ENCODE measurements at regions of chr1 and their contacts with region 1.

Region 1: DNA sequence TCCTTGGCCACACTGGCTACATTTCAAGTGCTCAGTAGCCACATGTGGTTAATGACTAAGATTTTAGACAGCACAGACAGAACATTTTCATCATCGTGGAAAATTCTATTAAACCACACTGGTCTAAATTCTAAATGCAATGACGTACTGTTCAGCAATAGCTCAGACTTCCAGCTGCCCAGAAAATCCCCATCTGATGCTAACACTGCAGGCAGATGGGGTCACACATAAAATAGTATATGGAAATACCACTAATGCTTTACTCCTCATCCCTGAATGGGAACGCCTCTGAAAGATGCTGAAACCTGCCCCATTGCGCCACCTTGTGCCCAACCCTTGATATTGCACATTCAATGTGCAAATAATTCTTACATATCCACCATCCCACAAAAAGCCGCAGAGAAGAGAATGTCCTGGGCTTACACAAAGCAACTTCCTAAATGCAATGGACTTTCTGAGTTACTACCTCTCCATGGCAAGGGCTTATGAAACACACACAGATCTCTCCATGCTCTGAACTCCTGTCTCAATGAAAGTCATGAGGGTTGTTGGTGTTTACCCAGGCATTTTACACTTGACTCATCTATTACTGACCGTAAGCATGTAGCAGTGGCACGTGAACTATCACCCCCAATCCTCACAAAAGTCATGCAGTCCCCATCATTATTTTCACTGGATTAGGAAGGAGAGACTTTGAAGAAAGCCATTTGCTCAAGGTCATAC is 20.3 kb upstream of the SLC5A9 start:
- DNase-seq: peak in 1 of 2 donors; percentile 53
- ATAC-seq: peak; percentile 80

Region 2: DNA sequence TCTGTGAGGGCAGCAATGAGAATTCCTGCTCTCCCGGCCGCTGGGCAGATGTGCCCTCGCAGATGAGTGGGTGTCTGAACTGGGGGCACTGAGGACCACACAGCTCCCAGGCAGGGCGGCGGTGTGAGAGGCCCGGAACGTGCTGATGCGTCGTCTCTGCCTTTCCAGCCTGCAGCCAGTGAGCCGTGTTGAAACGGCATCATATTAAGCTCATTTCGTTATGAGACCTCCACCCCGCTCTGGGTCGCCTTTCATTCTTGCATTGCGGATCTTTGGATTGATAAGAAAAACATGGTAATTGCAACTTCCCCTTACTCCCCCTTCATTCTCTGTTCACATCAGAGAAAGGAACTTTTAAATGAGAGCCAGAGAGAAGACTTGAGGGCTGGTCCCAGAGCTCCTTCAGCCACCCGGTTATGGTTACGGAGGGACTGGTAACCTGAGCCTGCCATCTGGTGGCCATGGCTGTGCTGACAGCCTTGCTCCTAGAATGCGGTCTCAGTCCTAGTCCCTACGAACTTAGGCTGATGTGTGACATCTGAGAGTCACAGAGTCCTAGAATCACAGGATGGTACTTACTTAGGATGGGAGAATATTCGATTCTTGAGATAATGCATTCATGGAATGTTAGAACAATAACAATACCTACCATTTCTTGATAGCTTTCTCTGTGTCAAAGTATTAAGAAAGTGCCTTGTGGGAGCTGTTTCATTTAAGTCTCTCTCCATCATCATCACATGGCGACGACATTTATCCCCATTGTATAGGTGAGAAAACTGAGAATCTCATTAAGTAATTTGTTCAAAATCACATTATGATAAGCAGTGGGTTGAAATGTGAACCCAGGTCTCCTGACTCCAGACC is 476.0 kb before region 1 on chr1:
- intact Hi-C with region 1: loop called in 1 of 2 experiments (anchors 5 kb)
- DNase-seq: peak; percentile 84 to 92
- ATAC-seq: peak; percentile 52

Region 3: DNA sequence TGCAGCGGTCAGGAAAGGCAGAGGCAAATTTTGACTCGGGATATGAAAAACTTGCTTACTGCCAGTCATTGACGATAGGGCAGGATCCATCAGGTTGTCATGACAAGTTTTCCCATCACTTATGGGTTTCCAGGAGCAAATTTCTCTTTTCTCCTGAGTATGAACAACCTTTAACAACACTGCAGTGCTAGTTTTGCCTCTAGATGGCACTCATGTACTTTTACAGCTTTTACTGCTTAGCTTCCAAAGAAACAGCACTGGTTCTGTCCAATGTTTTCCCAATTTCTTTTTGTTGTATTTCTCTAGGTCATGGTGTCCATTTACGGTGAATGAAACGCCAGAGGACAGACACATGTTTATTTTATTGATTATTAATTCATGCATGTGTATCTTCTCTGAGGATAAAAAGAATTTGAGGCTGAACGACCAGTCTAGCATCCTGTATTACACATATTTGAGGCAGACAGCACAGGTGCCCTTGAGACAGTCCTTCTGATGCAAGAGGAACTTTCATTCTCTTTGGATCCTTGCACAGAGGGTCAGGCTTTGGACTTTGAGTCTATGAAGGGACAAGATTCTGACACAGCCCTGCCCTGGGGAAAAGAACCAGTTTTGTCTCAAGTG is 92.7 kb before region 1 on chr1:
- intact Hi-C with region 1: loop called in 1 of 2 experiments (anchors 2 kb)
- DNase-seq: no peak
- ATAC-seq: peak; percentile 73

Region 4: GRCh38 chr1:48396208-48396607 is 194.0 kb after region 1 on chr1:
- intact Hi-C with region 1: no loop called
- DNase-seq: no peak
- ATAC-seq: no peak

Measured in left colon (tissue), 2 donors.